Heart left ventricle (tissue), 16 donors: ENCODE measurements at regions of chr11 and their contacts with region 1.

Region 1: DNA sequence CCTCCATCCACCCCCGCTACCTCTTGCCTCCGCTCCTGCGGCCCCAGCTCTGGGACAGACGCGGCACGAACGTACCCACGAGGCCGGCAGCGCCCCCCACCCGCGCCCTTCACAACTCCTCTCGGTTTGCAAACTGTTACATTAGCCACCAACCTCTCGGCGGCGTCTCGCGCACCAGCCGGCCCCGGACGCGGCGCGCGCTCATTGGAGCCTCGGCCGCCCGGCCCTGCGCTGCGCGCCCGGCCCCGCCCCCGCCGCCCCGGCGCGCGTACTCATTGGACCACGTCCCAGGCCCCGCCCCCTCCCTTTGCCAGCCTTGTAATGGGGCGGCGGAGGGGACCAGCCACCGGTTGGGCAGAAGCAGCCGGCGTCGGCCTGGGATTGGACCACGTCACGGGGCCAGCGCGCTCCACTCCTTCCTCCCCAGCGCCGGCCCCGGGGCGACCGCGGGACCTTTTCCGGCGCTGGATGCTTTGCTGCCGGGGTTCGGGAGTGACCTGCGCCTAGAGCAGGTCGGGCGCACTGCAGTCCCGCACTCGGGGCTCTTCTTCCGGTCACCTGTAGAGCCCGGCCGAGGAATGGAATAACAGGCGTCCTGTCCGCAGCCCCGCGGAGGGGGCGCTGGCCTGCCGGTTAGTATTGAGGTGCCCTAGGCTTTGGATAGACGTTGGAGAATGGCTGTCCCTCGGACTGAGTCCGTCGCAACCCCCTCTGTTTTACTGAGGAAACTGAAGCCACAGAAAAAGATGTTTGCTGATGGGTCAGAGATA is at the start of gene HYOU1:
- DNase-seq: peak; percentile 98 to 100 (median 99)
- ATAC-seq: peak; percentile 96 to 99 (median 97)
- H3K4me3 ChIP-seq: peak within 1 kb of the TSS; percentile 70 to 99 (median 90)
- H3K27ac ChIP-seq: peak within 1 kb of the TSS; percentile 76 to 93 (median 87)
- H3K4me1 ChIP-seq: peaks cover 2 to 26% (median 18%) of the 10 kb centered on the region in 12 donors
- H3K27me3 ChIP-seq: no peaks in the 10 kb centered on the region
- CTCF ChIP-seq: peak in 3 of 12 donors; percentile 12 to 46 (median 26)
- POLR2A ChIP-seq: peak; percentile 72 to 73
- total RNA-seq, gene HYOU1: 45.9 to 104 (median 68.6) TPM

Region 2: DNA sequence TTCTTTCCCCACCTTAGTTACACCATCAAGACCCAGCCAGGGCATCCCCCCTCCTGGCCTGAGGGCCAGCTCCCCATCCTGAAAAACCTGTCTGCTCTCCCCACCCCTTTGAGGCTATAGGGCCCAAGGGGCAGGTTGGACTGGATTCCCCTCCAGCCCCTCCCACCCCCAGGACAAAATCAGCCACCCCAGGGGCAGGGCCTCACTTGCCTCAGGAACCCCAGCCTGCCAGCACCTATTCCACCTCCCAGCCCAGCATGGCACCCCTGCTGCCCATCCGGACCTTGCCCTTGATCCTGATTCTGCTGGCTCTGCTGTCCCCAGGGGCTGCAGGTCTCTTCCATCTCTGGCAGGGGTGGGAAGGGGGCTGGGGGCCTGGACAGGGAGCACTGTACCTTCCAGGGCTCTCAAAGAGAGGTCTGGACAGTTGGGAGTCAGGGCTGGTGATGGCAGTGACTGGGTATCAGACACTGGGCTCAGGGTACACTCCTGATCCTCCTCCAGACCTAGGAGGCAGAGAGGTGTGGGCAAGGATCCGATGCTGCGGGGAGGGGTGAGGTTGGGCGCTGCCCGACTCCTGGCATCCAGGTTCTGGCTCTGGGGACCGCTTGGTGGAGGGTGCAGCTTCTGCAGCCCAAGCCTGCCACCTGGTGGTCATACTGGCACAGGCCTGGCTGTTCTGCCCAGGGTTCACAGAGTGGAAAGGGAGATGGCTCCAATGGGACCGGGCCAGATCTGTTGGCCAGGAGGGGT is 100.9 kb before region 1 on chr11 and contains the start of gene UPK2:
- intact Hi-C with region 1: no loop called
- DNase-seq: peak; percentile 84 to 94 (median 88)
- ATAC-seq: peak; percentile 93 to 98 (median 96)
- H3K4me3 ChIP-seq: no peak within 1 kb of the TSS
- H3K27ac ChIP-seq: no peak within 1 kb of the TSS
- H3K4me1 ChIP-seq: peaks cover 0 to 7% (median 0%) of the 10 kb centered on the region in 12 donors
- H3K27me3 ChIP-seq: peaks cover 0 to 9% (median 0%) of the 10 kb centered on the region in 9 donors
- CTCF ChIP-seq: peak; percentile 92 to 95 (median 93)
- POLR2A ChIP-seq: no peak
- total RNA-seq, gene UPK2: not detected

Region 3: GRCh38 chr11:119084663-119085436 is 27.7 kb after region 1 on chr11 and contains the start of gene HMBS:
- intact Hi-C with region 1: loop called in 1 of 10 experiments (anchors 2 kb)
- DNase-seq: peak; percentile 92 to 97 (median 95)
- ATAC-seq: peak; percentile 95 to 98 (median 98)
- H3K4me3 ChIP-seq: peak within 1 kb of the TSS; percentile 49 to 89 (median 77)
- H3K27ac ChIP-seq: peak within 1 kb of the TSS; percentile 73 to 98 (median 91)
- H3K4me1 ChIP-seq: peaks cover 0 to 33% (median 11%) of the 10 kb centered on the region in 12 donors
- H3K27me3 ChIP-seq: no peaks in the 10 kb centered on the region
- CTCF ChIP-seq: no peak
- POLR2A ChIP-seq: peak in 1 of 2 donors; percentile 47
- total RNA-seq, gene HMBS: 8.1 to 24.1 (median 16.6) TPM

Region 4: DNA sequence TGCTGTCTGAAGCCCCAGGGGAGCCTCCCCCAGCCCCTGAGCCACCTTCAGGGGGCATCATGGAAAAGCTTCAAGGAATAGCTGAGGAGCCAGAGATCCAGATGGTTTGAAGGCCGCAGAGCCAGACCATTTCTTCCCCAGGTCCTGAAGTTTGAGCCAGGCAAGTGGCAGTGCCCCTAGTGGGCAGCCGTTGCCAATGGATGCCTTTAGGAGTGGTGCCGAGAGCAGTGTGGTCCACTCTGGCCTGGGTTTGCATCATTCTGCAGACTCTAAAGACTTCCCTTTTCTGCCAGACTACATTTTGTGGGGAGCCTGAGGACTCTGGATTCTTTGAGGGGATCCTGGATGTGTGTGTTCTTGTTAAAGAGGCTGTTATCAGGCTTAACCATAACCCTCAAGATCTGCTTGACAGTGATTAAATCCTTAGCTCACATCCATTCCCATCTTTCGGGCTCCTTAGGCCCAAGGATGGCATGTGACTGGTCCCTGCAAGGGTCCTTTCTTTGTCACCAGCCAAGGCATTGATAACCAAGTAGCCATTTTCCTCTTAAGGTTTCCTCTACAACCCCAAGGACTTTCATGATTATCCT is 77.3 kb after region 1 on chr11:
- intact Hi-C with region 1: no loop called
- DNase-seq: no peak
- ATAC-seq: peak in 2 of 4 donors; percentile 41 to 62
- H3K4me3 ChIP-seq: no peak overlapping the region
- H3K27ac ChIP-seq: no peak overlapping the region
- H3K4me1 ChIP-seq: peaks cover 0 to 21% (median 0%) of the 10 kb centered on the region in 12 donors
- H3K27me3 ChIP-seq: no peaks in the 10 kb centered on the region
- CTCF ChIP-seq: peak in 10 of 12 donors; percentile 21 to 51 (median 34)
- POLR2A ChIP-seq: no peak

Region 5: GRCh38 chr11:119236490-119236889 is 179.3 kb after region 1 on chr11:
- intact Hi-C with region 1: no loop called
- DNase-seq: no peak
- ATAC-seq: no peak
- H3K4me3 ChIP-seq: no peak overlapping the region
- H3K27ac ChIP-seq: no peak overlapping the region
- H3K4me1 ChIP-seq: peaks cover 0 to 14% (median 0%) of the 10 kb centered on the region in 12 donors
- H3K27me3 ChIP-seq: no peaks in the 10 kb centered on the region
- CTCF ChIP-seq: no peak
- POLR2A ChIP-seq: no peak